Mammary epithelial cell (primary cell): ENCODE measurements at regions of chr2 and their contacts with region 1.

Region 1: DNA sequence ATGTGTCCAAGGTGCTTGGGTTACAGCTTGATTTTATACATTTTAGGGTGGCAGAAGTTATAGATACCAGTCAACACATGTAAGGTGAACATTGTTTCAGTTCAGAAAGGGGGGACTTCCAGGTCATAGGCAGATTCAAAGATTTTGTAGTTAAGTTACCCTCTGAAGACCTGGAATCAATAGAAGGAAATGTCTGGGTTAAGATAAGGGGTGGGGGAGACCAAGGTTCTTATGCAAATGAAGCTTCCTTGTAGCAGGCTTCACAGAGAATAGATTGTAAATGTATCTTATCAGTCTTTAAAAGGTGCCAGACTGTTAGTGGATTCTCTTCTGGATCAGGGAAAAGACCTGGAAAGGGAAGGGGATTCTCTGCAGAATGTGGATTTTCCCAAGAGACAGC is 42.4 kb downstream of the BMPR2 start:
- DNase-seq: no peak
- H3K4me3 ChIP-seq: no peak overlapping the region
- H3K27ac ChIP-seq: no peak overlapping the region
- H3K4me1 ChIP-seq: no peaks in the 10 kb centered on the region
- H3K27me3 ChIP-seq: no peaks in the 10 kb centered on the region
- CTCF ChIP-seq: no peak

Region 2: DNA sequence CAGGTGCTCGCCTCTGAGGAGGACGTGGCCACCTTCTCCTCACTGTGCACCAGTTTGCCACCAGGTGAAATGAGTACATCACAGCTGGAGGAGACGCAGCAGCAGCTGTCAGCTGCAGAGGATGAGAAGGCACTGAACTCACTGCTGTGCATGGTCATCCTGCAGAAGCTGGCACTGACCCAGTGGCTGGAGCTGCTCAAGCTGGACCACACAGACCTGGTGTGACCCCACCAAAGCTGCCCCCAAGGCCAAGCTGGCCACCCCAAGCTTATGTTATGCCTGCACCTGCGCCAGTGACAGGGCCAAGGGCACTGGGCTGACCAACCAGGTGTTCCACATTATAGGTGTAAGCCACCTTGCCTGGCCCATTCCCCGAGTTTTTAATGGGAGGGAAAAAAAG is 1573.3 kb before region 1 on chr2:
- CTCF ChIA-PET with region 1: no interaction called
- dilution Hi-C with region 1: no loop called
- in situ Hi-C with region 1: no loop called
- intact Hi-C with region 1: no loop called
- DNase-seq: no peak
- H3K4me3 ChIP-seq: no peak overlapping the region
- H3K27ac ChIP-seq: no peak overlapping the region
- H3K4me1 ChIP-seq: no peaks in the 10 kb centered on the region
- H3K27me3 ChIP-seq: no peaks in the 10 kb centered on the region
- CTCF ChIP-seq: no peak

Region 3: DNA sequence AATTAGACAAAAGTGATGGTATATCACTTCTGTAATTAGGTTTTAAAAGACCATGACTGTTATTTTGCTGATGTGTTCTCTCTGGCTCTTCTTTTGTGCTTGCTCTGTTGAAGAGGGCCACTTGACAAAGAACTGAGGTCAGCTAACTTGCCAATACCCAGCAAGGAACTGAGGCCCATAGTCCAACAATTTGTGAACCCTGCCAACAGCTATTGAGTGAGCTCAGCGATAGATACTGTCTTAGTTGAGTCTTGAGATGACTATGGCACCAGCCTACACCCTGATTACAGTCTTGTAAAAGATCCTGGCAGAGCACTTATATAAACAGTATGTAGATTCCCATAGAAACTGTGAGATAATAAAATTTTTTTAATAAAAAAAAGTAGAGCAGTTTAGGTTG is 60.6 kb after region 1 on chr2:
- CTCF ChIA-PET with region 1: no interaction called
- dilution Hi-C with region 1: no loop called
- in situ Hi-C with region 1: no loop called
- intact Hi-C with region 1: no loop called
- DNase-seq: no peak
- H3K4me3 ChIP-seq: no peak overlapping the region
- H3K27ac ChIP-seq: no peak overlapping the region
- H3K4me1 ChIP-seq: no peaks in the 10 kb centered on the region
- H3K27me3 ChIP-seq: no peaks in the 10 kb centered on the region
- CTCF ChIP-seq: no peak

Region 4: GRCh38 chr2:202494300-202495229 is 76.1 kb after region 1 on chr2:
- CTCF ChIA-PET with region 1: no interaction called
- dilution Hi-C with region 1: loop called (anchors 5 kb)
- in situ Hi-C with region 1: no loop called
- intact Hi-C with region 1: no loop called
- DNase-seq: no peak
- H3K4me3 ChIP-seq: no peak overlapping the region
- H3K27ac ChIP-seq: no peak overlapping the region
- H3K4me1 ChIP-seq: no peaks in the 10 kb centered on the region
- H3K27me3 ChIP-seq: no peaks in the 10 kb centered on the region
- CTCF ChIP-seq: no peak